Heart right ventricle (tissue), 16 donors: ENCODE measurements at regions of chr18 and their contacts with region 1.

Region 1: DNA sequence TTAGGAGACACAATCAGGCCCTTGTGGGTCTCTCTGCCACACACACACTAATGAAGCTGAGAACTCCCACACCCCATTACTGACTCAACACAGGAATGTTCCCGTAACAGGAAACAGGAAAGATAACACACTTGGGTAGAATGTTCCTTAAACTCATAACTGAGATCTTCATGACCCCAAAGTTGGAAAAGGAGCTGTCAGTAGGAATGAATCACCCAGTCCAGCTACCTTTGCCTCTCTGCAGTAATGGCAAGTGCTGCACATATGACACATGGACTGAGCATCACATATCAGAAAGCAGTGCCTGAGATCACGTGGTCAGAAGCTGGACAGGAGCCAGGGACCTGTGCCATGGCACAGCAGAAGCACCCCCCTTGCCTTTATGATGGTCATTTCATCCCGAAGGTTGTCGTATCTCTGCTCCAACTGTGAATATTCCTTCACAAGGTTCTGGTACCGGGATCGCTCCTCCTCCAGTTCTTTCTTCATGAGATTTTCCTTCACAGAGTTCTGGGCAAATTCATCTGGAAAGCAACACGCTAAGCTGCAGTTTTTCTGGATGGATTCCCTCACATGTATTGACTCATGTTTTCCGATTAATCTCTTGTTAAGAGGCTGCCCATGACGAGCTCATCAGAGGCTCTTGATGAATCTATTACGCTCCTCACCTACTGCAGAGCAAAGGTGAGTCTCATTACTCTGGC is 65.4 kb upstream of the ACAA2 start:
- DNase-seq: no peak
- ATAC-seq: no peak
- H3K4me3 ChIP-seq: no peak overlapping the region
- H3K27ac ChIP-seq: no peak overlapping the region
- H3K4me1 ChIP-seq: no peaks in the 10 kb centered on the region
- H3K27me3 ChIP-seq: peaks cover 0 to 9% (median 5%) of the 10 kb centered on the region in 7 donors
- CTCF ChIP-seq: no peak

Region 2: DNA sequence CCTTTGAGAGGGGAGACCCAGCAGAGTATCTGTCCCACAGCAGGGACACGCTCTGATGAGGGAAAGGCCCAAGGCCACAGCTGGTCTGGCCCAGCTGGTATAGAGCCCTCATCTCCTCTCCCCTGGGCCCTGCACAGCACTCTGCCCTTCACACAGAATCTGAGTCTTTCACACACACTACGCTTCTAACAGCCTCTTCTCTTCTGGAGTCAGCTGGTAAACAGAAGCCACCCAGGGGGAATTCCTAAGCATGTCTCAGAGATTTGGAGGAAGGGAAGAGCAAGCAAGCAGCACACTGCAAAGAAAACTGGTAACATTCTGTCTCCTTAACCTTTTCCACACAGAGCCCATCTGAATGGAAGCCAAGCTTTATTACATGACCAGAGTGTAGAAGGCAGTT is 55.7 kb after region 1 on chr18:
- intact Hi-C with region 1: loop called in 1 of 10 experiments (anchors 10 kb)
- DNase-seq: no peak
- ATAC-seq: peak in 2 of 8 donors; percentile 27 to 54
- H3K4me3 ChIP-seq: no peak overlapping the region
- H3K27ac ChIP-seq: peak overlapping the region in 1 of 10 donors; percentile 20
- H3K4me1 ChIP-seq: peaks cover 0 to 11% (median 0%) of the 10 kb centered on the region in 9 donors
- H3K27me3 ChIP-seq: peaks cover 0 to 7% (median 0%) of the 10 kb centered on the region in 7 donors
- CTCF ChIP-seq: no peak